ENCODE measurements at regions of chr1 and their contacts with region 1.

Region 1: GRCh38 chr1:219566951-219567947 is 45.7 kb downstream of the ZC3H11B start:
- DNase-seq: no peak
- H3K4me3 ChIP-seq: no peak overlapping the region
- CTCF ChIP-seq: peak; percentile 62

Region 2: GRCh38 chr1:218339267-218339831 is 1227.9 kb before region 1 on chr1:
- CTCF ChIA-PET with region 1: interaction called, 10 read pairs
- POLR2A ChIA-PET with region 1: no interaction called
- DNase-seq: no peak
- H3K4me3 ChIP-seq: no peak overlapping the region
- CTCF ChIP-seq: peak; percentile 61

Region 3: DNA sequence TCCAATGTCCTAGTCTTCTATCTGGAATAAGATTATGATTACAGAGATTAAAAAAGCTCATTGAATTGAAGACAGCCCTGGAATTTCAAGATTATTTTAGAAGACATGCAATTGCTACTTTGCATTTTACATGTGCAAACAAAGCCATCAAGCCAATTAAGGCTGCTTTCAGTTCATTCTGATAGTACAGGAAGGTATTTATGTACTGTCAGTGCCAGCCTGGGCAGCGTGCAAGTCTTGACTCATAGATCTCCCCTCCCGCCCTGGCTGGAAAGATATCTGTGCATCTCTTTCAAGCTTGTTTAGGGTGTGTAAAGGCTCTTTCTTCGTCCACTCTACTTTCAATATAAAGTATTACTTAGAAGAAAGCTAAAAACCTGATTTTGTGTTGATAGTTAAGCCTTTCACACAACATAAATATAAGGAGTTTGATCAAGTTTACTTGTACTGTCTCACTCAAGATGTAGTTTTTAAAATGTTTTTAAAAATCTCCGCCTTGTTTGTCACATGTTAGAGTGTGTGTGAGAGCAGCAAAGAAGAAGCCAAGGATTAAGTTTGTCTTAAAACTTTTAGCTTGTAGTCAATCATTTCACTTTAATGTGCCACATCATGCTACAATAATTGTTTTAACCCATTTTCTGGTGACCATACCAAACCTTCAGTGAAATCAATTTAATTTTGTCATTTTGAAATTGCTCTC is 407.2 kb before region 1 on chr1:
- CTCF ChIA-PET with region 1: no interaction called
- POLR2A ChIA-PET with region 1: no interaction called
- DNase-seq: no peak
- H3K4me3 ChIP-seq: no peak overlapping the region
- CTCF ChIP-seq: no peak

Measured in AG04449 (cell line).